ENCODE measurements at regions of chr22 and their contacts with region 1.

Region 1: DNA sequence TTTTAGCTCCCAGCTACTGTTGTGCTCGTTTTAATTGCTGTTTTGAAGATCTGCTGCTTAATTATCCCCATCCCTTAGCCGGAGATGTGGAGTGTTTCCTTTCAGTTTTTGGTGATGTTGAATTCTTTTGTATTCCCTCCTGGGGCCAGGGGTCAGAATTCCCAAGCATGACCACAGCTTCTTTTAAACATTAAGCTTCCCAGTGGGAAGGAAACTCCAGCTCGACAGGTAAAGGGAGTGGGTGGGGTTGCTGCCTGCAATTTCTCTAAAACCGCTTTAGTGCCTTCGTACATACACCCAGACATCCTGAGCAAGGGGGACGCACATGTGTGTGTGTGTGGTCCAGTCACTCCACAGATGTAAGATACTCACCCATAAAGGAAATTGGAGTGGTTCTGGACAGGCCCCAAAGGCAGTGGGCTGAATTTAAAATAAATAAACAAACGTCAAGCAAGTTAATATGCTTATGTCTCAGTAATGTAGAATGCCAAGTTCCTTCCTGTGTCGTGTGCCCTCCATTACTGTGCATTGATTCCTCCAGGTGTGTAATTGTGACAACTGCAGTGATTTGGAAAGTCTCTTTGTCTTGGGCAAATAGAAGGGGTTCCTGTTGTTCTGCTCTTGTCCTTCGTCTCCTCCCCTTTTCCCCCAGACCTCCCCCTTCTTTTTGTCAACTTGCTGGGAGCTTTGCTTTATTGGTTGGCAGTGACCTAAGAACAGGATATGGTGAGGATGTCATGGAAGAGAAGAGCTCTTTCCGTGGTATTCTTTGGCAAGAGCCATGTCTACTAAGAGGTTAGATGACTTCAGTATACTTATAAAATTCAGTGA is 19.2 kb upstream of the ADSL start:
- DNase-seq: no peak
- H3K4me3 Mint-ChIP-seq: peak overlapping the region; percentile 29
- H3K27ac Mint-ChIP-seq: peak overlapping the region; percentile 80
- H3K4me1 Mint-ChIP-seq: peaks cover 90% of the 10 kb centered on the region
- H3K27me3 Mint-ChIP-seq: no peaks in the 10 kb centered on the region

Region 2: DNA sequence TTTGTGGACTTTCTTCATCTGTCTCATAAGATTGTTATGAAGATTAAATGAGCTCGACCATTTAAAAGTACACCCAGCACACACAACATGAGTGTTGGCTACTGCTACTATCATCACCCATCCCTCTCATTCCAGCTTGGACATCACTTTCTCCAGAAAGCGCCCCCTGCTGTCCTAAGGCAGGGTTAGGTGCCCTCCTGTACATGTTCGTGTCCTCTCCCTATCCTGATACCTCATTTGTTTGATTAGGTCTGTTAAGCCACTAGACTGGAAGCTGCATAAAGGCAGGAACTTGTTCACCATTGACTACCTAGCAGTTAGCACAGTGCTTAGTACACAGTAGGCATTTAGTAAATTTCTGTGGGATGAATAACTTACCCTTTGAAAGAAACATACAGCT is 519.0 kb before region 1 on chr22:
- intact Hi-C with region 1: no loop called
- DNase-seq: no peak
- H3K4me3 Mint-ChIP-seq: no peak overlapping the region
- H3K27ac Mint-ChIP-seq: no peak overlapping the region
- H3K4me1 Mint-ChIP-seq: peaks cover 34% of the 10 kb centered on the region
- H3K27me3 Mint-ChIP-seq: no peaks in the 10 kb centered on the region

Region 3: GRCh38 chr22:39908737-39909136 is 418.4 kb before region 1 on chr22:
- intact Hi-C with region 1: loop called (anchors 2 kb)
- DNase-seq: no peak
- H3K4me3 Mint-ChIP-seq: peak overlapping the region; percentile 92
- H3K27ac Mint-ChIP-seq: peak overlapping the region; percentile 96
- H3K4me1 Mint-ChIP-seq: peaks cover 95% of the 10 kb centered on the region
- H3K27me3 Mint-ChIP-seq: no peaks in the 10 kb centered on the region

Region 4: DNA sequence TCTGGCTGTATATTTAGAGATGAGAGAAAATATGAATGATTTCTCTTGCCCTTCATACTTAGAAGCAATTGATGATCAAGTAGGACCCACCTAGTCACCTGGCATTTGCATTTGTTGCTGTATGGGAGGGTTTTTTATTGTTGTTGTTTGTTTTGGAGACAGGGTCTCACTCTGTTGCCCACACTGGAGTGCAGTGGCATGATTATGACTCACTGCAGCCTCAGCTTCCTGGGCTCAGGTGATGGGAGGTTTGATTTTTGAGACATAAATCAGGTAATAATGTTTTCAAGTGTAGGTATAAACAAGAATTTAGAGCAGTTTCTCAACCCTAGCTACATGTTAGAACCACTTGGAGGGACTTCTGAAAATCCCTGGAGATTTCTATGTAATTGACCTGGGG is 86.4 kb before region 1 on chr22:
- intact Hi-C with region 1: loop called (anchors 1 kb)
- DNase-seq: peak; percentile 11
- H3K4me3 Mint-ChIP-seq: no peak overlapping the region
- H3K27ac Mint-ChIP-seq: peak overlapping the region; percentile 74
- H3K4me1 Mint-ChIP-seq: peaks cover 63% of the 10 kb centered on the region
- H3K27me3 Mint-ChIP-seq: no peaks in the 10 kb centered on the region

Region 5: GRCh38 chr22:40289991-40290459 is 37.1 kb before region 1 on chr22:
- intact Hi-C with region 1: loop called (anchors 1 kb)
- DNase-seq: peak; percentile 61
- H3K4me3 Mint-ChIP-seq: peak overlapping the region; percentile 65
- H3K27ac Mint-ChIP-seq: peak overlapping the region; percentile 95
- H3K4me1 Mint-ChIP-seq: peaks cover 55% of the 10 kb centered on the region
- H3K27me3 Mint-ChIP-seq: no peaks in the 10 kb centered on the region

Region 6: GRCh38 chr22:40346178-40347118 is 19.3 kb after region 1 on chr22 and contains the start of gene ADSL:
- intact Hi-C with region 1: loop called (anchors 1 kb)
- DNase-seq: peak; percentile 83
- H3K4me3 Mint-ChIP-seq: peak within 1 kb of the TSS; percentile 94
- H3K27ac Mint-ChIP-seq: peak within 1 kb of the TSS; percentile 97
- H3K4me1 Mint-ChIP-seq: peaks cover 40% of the 10 kb centered on the region
- H3K27me3 Mint-ChIP-seq: no peaks in the 10 kb centered on the region
- total RNA-seq, gene ADSL: 156 and 160 TPM in 2 replicates

Measured in activated T-helper 1 cell treated with anti-CD3 and anti-CD28 coated beads, Interleukin-12 subunit alpha, Interleukin-12 subunit beta, Interleukin-2, Interleukin-4 antibody, amounts not matched to agents 30 ng/mL and 10 ng/mL and 1 ng/mL, durations not matched to agents 14 hours and 24 hours and 36 hours (primary cell).